ENCODE measurements at regions of chrX and their contacts with region 1.

Region 1: GRCh38 chrX:148380650-148381561 is 119.5 kb upstream of the AFF2 start:
- DNase-seq: peak; percentile 29
- H3K4me3 Mint-ChIP-seq: peak overlapping the region; percentile 64
- H3K27ac Mint-ChIP-seq: peak overlapping the region; percentile 88
- H3K4me1 Mint-ChIP-seq: peaks cover 24% of the 10 kb centered on the region
- H3K27me3 Mint-ChIP-seq: no peaks in the 10 kb centered on the region

Region 2: GRCh38 chrX:147911192-147912022 is 469.5 kb before region 1 on chrX and contains the start of gene FMR1:
- intact Hi-C with region 1: loop called (anchors 1 kb)
- DNase-seq: peak; percentile 92
- H3K4me3 Mint-ChIP-seq: peak within 1 kb of the TSS; percentile 95
- H3K27ac Mint-ChIP-seq: peak within 1 kb of the TSS; percentile 86
- H3K4me1 Mint-ChIP-seq: peaks cover 27% of the 10 kb centered on the region
- H3K27me3 Mint-ChIP-seq: peaks cover 3% of the 10 kb centered on the region
- total RNA-seq, gene FMR1: 34.7 TPM in 2 replicates

Region 3: GRCh38 chrX:148192547-148192946 is 188.4 kb before region 1 on chrX:
- intact Hi-C with region 1: no loop called
- DNase-seq: no peak
- H3K4me3 Mint-ChIP-seq: no peak overlapping the region
- H3K27ac Mint-ChIP-seq: no peak overlapping the region
- H3K4me1 Mint-ChIP-seq: no peaks in the 10 kb centered on the region
- H3K27me3 Mint-ChIP-seq: no peaks in the 10 kb centered on the region

Region 4: GRCh38 chrX:148310426-148311165 is 70.3 kb before region 1 on chrX:
- intact Hi-C with region 1: loop called (anchors 1 kb)
- DNase-seq: peak; percentile 55
- H3K4me3 Mint-ChIP-seq: no peak overlapping the region
- H3K27ac Mint-ChIP-seq: peak overlapping the region; percentile 83
- H3K4me1 Mint-ChIP-seq: peaks cover 31% of the 10 kb centered on the region
- H3K27me3 Mint-ChIP-seq: no peaks in the 10 kb centered on the region

Region 5: GRCh38 chrX:148466292-148466691 is 85.4 kb after region 1 on chrX:
- intact Hi-C with region 1: loop called (anchors 1 kb)
- DNase-seq: no peak
- H3K4me3 Mint-ChIP-seq: no peak overlapping the region
- H3K27ac Mint-ChIP-seq: no peak overlapping the region
- H3K4me1 Mint-ChIP-seq: peaks cover 8% of the 10 kb centered on the region
- H3K27me3 Mint-ChIP-seq: peaks cover 13% of the 10 kb centered on the region

Region 6: DNA sequence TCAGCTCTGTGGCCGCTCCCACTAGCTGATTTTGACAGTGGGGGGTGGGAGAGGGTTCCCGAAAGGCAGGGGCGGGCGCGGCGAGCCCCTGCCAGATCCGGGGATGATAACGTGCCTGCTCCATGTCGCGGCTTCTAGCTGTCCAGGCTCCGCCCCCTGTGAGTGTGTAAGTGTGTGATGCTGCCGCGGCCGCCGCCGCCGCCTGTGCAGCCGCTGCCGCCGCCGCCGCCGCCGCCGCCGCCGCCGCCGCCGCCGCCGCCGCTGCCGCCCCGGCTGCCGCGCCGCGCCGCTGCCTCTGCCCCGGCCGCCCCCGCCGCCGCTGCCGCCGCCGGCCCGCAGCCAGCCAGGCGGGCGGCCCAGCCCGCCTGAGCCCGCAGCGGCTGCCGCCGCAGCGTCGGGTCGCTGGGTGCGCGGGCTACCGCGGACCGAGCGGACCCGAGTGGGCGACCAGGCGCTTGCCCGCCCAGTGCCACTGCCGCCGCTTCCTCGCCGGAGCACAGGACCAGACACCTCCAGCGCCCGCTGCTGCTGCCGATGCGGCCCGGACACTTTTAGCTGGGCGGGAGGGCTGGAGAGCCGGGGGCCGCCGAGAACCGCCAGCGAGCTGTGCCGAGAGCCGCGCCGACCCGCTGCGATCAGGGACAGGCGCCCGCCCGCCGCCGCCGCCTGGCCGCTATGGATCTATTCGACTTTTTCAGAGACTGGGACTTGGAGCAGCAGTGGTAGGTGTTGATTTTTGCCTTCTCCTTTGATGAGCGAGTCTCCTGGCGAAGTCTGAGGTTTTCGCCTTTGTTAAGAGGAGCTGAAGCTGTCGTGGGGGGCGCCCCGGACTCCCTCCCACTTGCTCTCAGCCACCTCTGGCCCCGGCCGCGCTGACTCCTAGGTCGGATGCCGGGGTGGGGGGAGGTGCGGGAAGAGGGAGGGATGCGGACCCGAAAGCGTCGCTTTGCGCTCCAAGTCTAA is 119.8 kb after region 1 on chrX and contains the start of gene AFF2:
- intact Hi-C with region 1: loop called (anchors 10 kb)
- DNase-seq: peak; percentile 13
- H3K4me3 Mint-ChIP-seq: peak within 1 kb of the TSS; percentile 82
- H3K27ac Mint-ChIP-seq: no peak within 1 kb of the TSS
- H3K4me1 Mint-ChIP-seq: peaks cover 6% of the 10 kb centered on the region
- H3K27me3 Mint-ChIP-seq: peaks cover 7% of the 10 kb centered on the region
- total RNA-seq, gene AFF2: 3.2 and 3.3 TPM in 2 replicates

Region 7: GRCh38 chrX:148612431-148612830 is 231.5 kb after region 1 on chrX:
- intact Hi-C with region 1: no loop called
- DNase-seq: no peak
- H3K4me3 Mint-ChIP-seq: no peak overlapping the region
- H3K27ac Mint-ChIP-seq: no peak overlapping the region
- H3K4me1 Mint-ChIP-seq: peaks cover 26% of the 10 kb centered on the region
- H3K27me3 Mint-ChIP-seq: no peaks in the 10 kb centered on the region

Measured in activated T-helper 2 cell treated with anti-CD3 and anti-CD28 coated beads, Interferon-gamma antibody, Interleukin-2, Interleukin-4, amounts not matched to agents 10 μg/mL and 5 μg/mL and 100 μg/mL, durations not matched to agents 14 hours and 24 hours and 36 hours (primary cell).